ENCODE measurements at regions of chr11 and their contacts with region 1.

Region 1: GRCh38 chr11:57567515-57568329 is at the start of gene UBE2L6:
- DNase-seq: no peak
- H3K4me3 ChIP-seq: peak within 1 kb of the TSS; percentile 83
- H3K27me3 ChIP-seq: no peaks in the 10 kb centered on the region
- CTCF ChIP-seq: no peak
- polyA plus RNA-seq, gene UBE2L6: 57.3 and 67.0 TPM in 2 replicates

Region 2: GRCh38 chr11:57335343-57336110 is 232.2 kb before region 1 on chr11 and contains the start of gene SSRP1:
- CTCF ChIA-PET with region 1: no interaction called
- POLR2A ChIA-PET with region 1: no interaction called
- DNase-seq: no peak
- H3K4me3 ChIP-seq: peak within 1 kb of the TSS; percentile 89
- H3K27me3 ChIP-seq: no peaks in the 10 kb centered on the region; the same call in 1 of the 2 replicates
- CTCF ChIP-seq: no peak
- polyA plus RNA-seq, gene SSRP1: 100 and 102 TPM in 2 replicates

Region 3: DNA sequence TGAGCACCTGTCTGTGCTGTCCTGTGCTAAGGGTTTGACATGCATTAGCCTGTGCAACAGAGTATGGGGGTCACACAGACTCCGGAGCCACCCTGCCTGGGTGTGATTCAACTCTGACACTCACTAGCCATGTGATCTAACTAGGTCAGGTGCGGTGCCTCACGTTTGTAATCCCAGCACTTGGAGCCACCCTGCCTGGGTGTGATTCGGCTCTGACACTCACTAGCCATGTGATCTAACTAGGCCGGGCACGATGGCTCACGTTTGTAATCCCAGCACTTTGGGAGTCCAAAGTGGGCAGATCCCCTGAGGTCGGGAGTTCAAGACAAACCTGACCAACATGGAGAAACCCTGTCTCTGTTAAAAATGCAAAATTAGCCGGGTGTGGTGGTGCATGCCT is 11.7 kb before region 1 on chr11:
- CTCF ChIA-PET with region 1: interaction called, 24 read pairs
- POLR2A ChIA-PET with region 1: no interaction called
- DNase-seq: no peak
- H3K4me3 ChIP-seq: no peak overlapping the region
- H3K27me3 ChIP-seq: no peaks in the 10 kb centered on the region
- CTCF ChIP-seq: no peak

Region 4: DNA sequence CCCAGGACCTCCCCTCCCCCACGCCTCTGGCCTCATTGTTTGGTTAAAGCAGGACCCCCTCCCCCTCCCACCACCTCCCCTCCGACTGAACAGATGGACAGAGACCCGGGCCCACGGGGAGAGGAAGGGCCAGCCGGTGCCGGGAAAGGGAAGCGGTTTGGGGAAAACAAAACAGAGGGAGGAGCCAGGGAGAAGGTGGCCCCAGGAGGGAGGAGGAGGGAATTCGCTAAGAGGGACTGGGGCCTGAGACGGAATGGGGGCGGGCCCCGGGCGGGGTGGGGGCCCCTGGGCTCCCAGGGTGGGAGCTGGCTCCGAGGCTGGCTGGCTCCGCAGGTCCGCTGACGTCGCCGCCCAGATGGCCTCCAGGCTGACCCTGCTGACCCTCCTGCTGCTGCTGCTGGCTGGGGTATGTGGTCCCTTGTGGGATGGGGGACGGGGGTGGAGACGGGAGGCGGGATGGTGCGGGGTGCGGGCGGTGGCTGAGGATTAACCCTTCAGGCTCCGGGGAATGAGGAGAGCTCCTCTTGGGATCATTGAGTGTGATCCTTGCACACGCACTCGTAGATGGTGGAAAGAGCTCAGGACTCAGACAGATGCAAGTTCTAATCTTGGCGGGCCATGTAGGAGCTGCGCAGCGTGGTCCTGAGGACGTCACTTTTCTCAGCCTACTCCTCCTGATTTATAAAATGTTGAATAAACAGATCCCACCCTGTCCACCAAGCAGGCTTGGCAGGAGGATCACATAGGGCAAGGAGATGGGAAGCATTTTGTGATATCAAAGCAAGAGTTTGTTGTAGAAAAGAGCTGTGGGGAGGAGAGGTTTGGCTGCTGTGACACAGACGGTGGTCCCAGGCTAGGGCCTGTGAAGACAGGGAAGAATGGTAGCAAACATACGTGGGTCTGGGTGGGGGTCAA is 30.5 kb after region 1 on chr11:
- CTCF ChIA-PET with region 1: interaction called, 50 read pairs
- POLR2A ChIA-PET with region 1: no interaction called
- DNase-seq: no peak
- H3K4me3 ChIP-seq: peak overlapping the region; percentile 60
- H3K27me3 ChIP-seq: 0 out of 2 replicates have a peak, but pooled peaks cover 3% of the 10 kb centered on the region
- CTCF ChIP-seq: no peak

Region 5: GRCh38 chr11:57630193-57630592 is 62.5 kb after region 1 on chr11:
- CTCF ChIA-PET with region 1: interaction called, 11 read pairs
- POLR2A ChIA-PET with region 1: no interaction called
- DNase-seq: no peak
- H3K4me3 ChIP-seq: no peak overlapping the region
- H3K27me3 ChIP-seq: peaks cover 2% of the 10 kb centered on the region; the same call in 1 of the 2 replicates
- CTCF ChIP-seq: no peak

Region 6: GRCh38 chr11:57649826-57650738 is 82.4 kb after region 1 on chr11 and contains the start of gene YPEL4:
- CTCF ChIA-PET with region 1: interaction called, 285 read pairs
- POLR2A ChIA-PET with region 1: no interaction called
- DNase-seq: no peak
- H3K4me3 ChIP-seq: peak within 1 kb of the TSS; percentile 41
- H3K27me3 ChIP-seq: no peaks in the 10 kb centered on the region; the same call in 1 of the 2 replicates
- CTCF ChIP-seq: no peak
- polyA plus RNA-seq, gene YPEL4: 0.26 TPM in 2 replicates

Region 7: DNA sequence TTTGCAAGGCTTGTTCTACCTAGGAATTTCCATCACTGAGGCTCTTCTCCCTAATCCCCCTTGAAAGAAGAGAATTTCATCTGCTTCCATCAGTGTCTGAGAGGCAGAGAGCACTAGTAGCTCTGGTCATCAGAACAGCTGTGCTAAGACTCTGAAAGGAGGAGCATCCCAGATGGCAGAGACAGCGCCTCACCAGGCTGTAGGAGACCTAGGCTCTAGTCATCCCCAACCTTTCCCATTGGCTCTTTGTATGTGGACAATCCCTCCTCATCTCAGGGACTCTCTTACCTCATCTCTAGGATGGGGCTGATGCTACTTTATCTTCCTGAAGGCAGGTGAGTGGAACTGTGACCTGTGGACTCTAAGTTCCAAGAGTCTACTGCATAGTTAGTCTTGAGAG is 566.4 kb after region 1 on chr11:
- CTCF ChIA-PET with region 1: no interaction called
- POLR2A ChIA-PET with region 1: no interaction called
- DNase-seq: no peak
- H3K4me3 ChIP-seq: no peak overlapping the region
- H3K27me3 ChIP-seq: no peaks in the 10 kb centered on the region
- CTCF ChIP-seq: no peak

Measured in BJ (cell line).